CD4-positive, alpha-beta memory T cell (primary cell): ENCODE measurements at regions of chr19 and their contacts with region 1.

Region 1: DNA sequence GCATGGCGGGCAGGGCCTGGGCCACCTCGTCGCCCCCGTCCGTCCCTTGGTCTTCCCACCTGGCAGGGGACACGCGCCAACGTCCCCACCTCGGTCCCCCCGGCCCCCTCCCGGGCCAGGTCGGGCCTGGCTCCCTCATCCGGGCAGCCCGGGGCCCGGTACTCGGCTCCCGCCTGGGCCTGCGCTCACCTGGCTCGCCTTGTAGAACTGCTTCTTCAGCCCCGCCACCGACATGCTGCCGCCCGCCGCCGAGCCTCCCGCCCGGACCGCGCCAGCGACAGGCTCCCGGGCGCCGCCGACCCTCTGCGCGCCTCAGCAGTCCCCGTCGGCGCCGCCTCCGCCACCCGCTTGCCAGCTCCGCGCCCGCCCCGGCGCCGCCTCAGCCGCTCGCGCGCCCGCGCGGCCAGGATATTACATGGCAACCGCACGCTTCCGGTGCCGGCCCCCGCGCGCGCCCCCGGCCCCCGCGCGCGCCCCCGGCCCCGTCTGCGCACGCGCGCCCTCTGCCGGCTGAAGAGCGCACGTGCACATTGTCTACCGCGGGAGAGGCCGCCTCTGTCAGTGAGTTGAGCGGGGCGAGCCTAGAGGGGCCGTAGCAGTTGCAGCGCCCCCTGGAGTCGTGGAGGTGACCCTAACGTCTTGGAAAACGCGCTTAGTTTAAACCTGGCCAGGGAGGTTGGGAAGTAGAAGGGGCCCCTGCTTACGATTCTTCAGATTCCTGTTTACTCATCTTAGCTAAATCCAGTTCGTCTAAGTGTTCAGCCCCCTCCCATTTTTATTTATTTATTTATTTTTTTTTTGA is at the start of gene SH3GL1:
- DNase-seq: peak; percentile 89 to 95 (median 92)
- H3K4me3 ChIP-seq: peak within 1 kb of the TSS; percentile 53 to 59
- H3K4me3 Mint-ChIP-seq: peak within 1 kb of the TSS; percentile 82 to 94 (median 92)
- H3K27ac ChIP-seq: peak within 1 kb of the TSS; percentile 89
- H3K27ac Mint-ChIP-seq: peak within 1 kb of the TSS; percentile 96 to 100 (median 99)
- H3K4me1 ChIP-seq: peaks cover 54% of the 10 kb centered on the region
- H3K4me1 Mint-ChIP-seq: peaks cover 30 to 75% (median 56%) of the 10 kb centered on the region in 4 donors
- H3K27me3 ChIP-seq: no peaks in the 10 kb centered on the region
- H3K27me3 Mint-ChIP-seq: no peaks in the 10 kb centered on the region
- total RNA-seq, gene SH3GL1: 40.1 to 45.6 TPM

Region 2: GRCh38 chr19:4246767-4247593 is 153.4 kb before region 1 on chr19 and contains the start of gene YJU2:
- CTCF ChIA-PET with region 1: interaction called, 6 read pairs
- POLR2A ChIA-PET with region 1: interaction called, 12 read pairs
- intact Hi-C with region 1: loop called (anchors 1 kb)
- DNase-seq: peak; percentile 98 to 100 (median 99)
- H3K4me3 ChIP-seq: peak within 1 kb of the TSS; percentile 88 to 89
- H3K4me3 Mint-ChIP-seq: peak within 1 kb of the TSS; percentile 91 to 98 (median 96)
- H3K27ac ChIP-seq: peak within 1 kb of the TSS; percentile 99
- H3K27ac Mint-ChIP-seq: peak within 1 kb of the TSS; percentile 97 to 100 (median 99)
- H3K4me1 ChIP-seq: peaks cover 16% of the 10 kb centered on the region
- H3K4me1 Mint-ChIP-seq: peaks cover 6 to 31% (median 20%) of the 10 kb centered on the region in 4 donors
- H3K27me3 ChIP-seq: no peaks in the 10 kb centered on the region
- H3K27me3 Mint-ChIP-seq: peaks cover 0 to 2% of the 10 kb centered on the region in 2 donors
- total RNA-seq, gene YJU2: 28.1 to 29.4 TPM

Region 3: GRCh38 chr19:4342615-4343369 is 57.5 kb before region 1 on chr19:
- CTCF ChIA-PET with region 1: interaction called, 12 read pairs
- POLR2A ChIA-PET with region 1: interaction called, 19 read pairs
- intact Hi-C with region 1: loop called (anchors 1 kb)
- DNase-seq: peak; percentile 94 to 98 (median 97)
- H3K4me3 ChIP-seq: peak overlapping the region; percentile 91 to 98
- H3K4me3 Mint-ChIP-seq: peak overlapping the region; percentile 81 to 93 (median 91)
- H3K27ac ChIP-seq: peak overlapping the region; percentile 79
- H3K27ac Mint-ChIP-seq: peak overlapping the region; percentile 88 to 97 (median 95)
- H3K4me1 ChIP-seq: peaks cover 28% of the 10 kb centered on the region
- H3K4me1 Mint-ChIP-seq: peaks cover 17 to 42% (median 28%) of the 10 kb centered on the region in 4 donors
- H3K27me3 ChIP-seq: no peaks in the 10 kb centered on the region
- H3K27me3 Mint-ChIP-seq: no peaks in the 10 kb centered on the region

Region 4: GRCh38 chr19:4375164-4376027 is 24.9 kb before region 1 on chr19:
- CTCF ChIA-PET with region 1: interaction called, 25 read pairs
- POLR2A ChIA-PET with region 1: interaction called, 85 read pairs
- intact Hi-C with region 1: loop called (anchors 1 kb)
- DNase-seq: no peak
- H3K4me3 ChIP-seq: no peak overlapping the region
- H3K4me3 Mint-ChIP-seq: peak overlapping the region in 1 of 8 donors; percentile 15
- H3K27ac ChIP-seq: no peak overlapping the region
- H3K27ac Mint-ChIP-seq: peak overlapping the region in 6 of 7 donors; percentile 29 to 85 (median 63)
- H3K4me1 ChIP-seq: peaks cover 95% of the 10 kb centered on the region
- H3K4me1 Mint-ChIP-seq: peaks cover 19 to 73% (median 48%) of the 10 kb centered on the region in 4 donors
- H3K27me3 ChIP-seq: no peaks in the 10 kb centered on the region
- H3K27me3 Mint-ChIP-seq: no peaks in the 10 kb centered on the region

Region 5: GRCh38 chr19:4471403-4472173 is 71.3 kb after region 1 on chr19:
- CTCF ChIA-PET with region 1: interaction called, 9 read pairs
- POLR2A ChIA-PET with region 1: interaction called, 16 read pairs
- intact Hi-C with region 1: loop called (anchors 1 kb)
- DNase-seq: peak; percentile 96 to 100 (median 99)
- H3K4me3 ChIP-seq: peak overlapping the region; percentile 27 to 68
- H3K4me3 Mint-ChIP-seq: no peak overlapping the region
- H3K27ac ChIP-seq: peak overlapping the region; percentile 74
- H3K27ac Mint-ChIP-seq: no peak overlapping the region
- H3K4me1 ChIP-seq: peaks cover 30% of the 10 kb centered on the region
- H3K4me1 Mint-ChIP-seq: peaks cover 9 to 26% (median 16%) of the 10 kb centered on the region in 4 donors
- H3K27me3 ChIP-seq: no peaks in the 10 kb centered on the region
- H3K27me3 Mint-ChIP-seq: no peaks in the 10 kb centered on the region

Region 6: GRCh38 chr19:4505897-4506744 is 105.8 kb after region 1 on chr19:
- CTCF ChIA-PET with region 1: no interaction called
- POLR2A ChIA-PET with region 1: no interaction called
- intact Hi-C with region 1: no loop called
- DNase-seq: no peak
- H3K4me3 ChIP-seq: no peak overlapping the region
- H3K4me3 Mint-ChIP-seq: no peak overlapping the region
- H3K27ac ChIP-seq: no peak overlapping the region
- H3K27ac Mint-ChIP-seq: peak overlapping the region in 2 of 7 donors; percentile 19 to 47
- H3K4me1 ChIP-seq: no peaks in the 10 kb centered on the region
- H3K4me1 Mint-ChIP-seq: no peaks in the 10 kb centered on the region
- H3K27me3 ChIP-seq: no peaks in the 10 kb centered on the region
- H3K27me3 Mint-ChIP-seq: no peaks in the 10 kb centered on the region

Region 7: DNA sequence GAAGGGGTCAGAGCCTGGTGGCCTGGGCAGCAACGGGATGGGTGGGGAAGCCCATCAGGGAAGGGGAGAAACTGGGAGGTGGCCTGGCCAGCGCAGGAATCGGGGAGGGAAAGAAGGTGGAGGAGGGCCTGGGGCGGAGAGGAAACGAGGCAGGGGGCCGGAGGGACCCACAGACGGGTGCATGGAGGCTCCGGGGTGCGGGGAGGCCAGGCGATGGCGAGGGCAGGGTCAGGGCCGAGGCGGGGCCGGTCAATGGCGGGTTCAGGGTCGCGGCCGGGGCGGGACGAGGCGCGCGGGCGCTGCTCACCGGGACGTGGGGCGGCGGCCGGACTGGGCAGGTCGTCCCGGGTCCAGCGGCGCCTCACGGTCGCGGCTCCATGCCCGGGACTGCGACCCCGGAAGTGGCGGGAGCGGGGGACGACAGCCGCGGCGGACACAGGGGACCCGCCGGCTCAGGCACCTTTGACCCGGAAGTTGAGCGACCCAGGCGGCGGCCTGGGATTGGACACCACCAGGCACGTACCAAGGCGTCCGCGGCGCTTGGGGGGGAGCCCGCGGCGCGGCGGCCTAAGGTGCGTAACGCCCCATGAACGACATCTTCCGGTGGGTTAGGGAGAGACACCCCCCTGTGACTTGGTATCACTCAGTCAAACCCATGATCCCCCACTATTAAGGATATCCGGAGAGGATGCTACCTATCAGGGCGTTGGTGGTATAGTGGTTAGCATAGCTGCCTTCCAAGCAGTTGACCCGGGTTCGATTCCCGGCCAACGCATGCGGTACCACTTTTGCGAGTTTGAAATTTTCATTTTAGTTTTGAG is 323.2 kb after region 1 on chr19 and contains the start of gene DPP9:
- CTCF ChIA-PET with region 1: no interaction called
- POLR2A ChIA-PET with region 1: no interaction called
- intact Hi-C with region 1: loop called (anchors 5 kb)
- DNase-seq: peak; percentile 98 to 99 (median 99)
- H3K4me3 ChIP-seq: peak within 1 kb of the TSS; percentile 89 to 96
- H3K4me3 Mint-ChIP-seq: peak within 1 kb of the TSS; percentile 90 to 97 (median 93)
- H3K27ac ChIP-seq: peak within 1 kb of the TSS; percentile 86
- H3K27ac Mint-ChIP-seq: peak within 1 kb of the TSS; percentile 95 to 100 (median 98)
- H3K4me1 ChIP-seq: peaks cover 36% of the 10 kb centered on the region
- H3K4me1 Mint-ChIP-seq: peaks cover 15 to 47% (median 31%) of the 10 kb centered on the region in 4 donors
- H3K27me3 ChIP-seq: no peaks in the 10 kb centered on the region
- H3K27me3 Mint-ChIP-seq: peaks cover 4 to 10% of the 10 kb centered on the region in 2 donors
- total RNA-seq, gene DPP9: 86.9 to 93.9 TPM